A549 (cell line): ENCODE measurements at regions of chr7 and their contacts with region 1.

Region 1: DNA sequence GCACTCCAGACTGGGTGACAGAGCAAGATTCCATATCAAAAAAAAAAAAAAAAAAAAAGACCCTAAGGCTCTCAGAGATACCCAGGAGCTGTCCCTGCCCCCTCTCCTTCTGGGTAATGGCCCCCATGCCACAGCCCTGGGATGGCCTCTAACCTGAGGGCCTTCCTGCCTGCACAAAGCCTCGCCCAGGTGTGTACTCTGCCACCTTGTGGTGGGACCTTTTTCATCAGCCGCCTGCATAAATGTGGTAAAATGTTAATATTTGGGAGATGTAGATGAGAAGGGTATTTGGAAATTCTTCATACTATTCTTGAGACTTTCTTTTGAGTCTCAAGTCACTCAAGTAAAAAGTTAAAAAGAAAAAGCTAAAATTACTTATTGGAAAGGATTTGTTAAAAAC is 46.3 kb upstream of the RNF216 start:
- DNase-seq: peak in 1 of 2 experiments; percentile 50
- ATAC-seq: no peak
- H3K4me3 ChIP-seq: no peak overlapping the region
- H3K27ac ChIP-seq: no peak overlapping the region
- H3K4me1 ChIP-seq: no peaks in the 10 kb centered on the region; the same call in 2 of the 3 replicates
- CTCF ChIP-seq: peak; percentile 58
- EP300 ChIP-seq: no peak
- POLR2A ChIP-seq: no peak
- RAD21 ChIP-seq: peak in 1 of 2 experiments; percentile 51; a peak in 2 of 5 replicates

Region 2: DNA sequence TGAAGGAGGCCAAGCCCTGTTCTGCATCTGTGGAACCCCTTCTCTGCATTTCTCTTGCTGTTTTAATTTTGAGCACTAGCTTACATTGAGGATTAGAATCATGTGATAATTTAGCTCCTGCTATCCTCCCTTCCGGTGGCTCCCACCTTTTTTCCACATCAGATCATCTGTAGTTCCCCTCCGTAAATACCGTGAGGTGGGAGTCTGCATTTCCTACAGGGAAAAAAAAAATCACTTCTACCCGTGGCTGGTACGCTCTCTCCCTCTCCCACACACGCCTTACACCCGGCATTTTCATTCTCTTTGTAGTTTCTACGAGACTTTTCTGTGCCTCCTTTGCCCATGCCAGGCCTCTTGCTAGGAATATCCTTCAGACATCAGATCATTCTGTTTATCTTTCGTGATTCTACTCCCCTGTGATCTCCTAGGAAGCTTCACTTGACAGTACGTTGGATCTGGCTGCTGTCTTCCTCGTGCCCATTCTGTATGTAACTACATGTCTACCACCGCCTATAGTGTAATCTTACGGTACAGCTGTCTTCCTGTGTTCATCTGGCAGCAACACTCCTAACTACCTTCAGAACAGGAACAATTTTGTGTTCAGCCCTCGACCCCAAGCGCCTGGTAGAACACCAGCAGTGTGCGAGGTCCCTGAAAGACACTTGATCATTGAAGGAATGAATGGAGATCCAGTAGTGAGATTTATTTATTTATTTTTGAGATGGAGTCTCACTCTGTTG is 11.2 kb after region 1 on chr7:
- CTCF ChIA-PET with region 1: interaction called, 15 read pairs
- POLR2A ChIA-PET with region 1: no interaction called
- DNase-seq: no peak
- ATAC-seq: 0 out of 6 replicates have a peak, but pooled peaks of 1 of the 2 experiments have one; percentile 13
- H3K4me3 ChIP-seq: no peak overlapping the region
- H3K27ac ChIP-seq: no peak overlapping the region
- H3K4me1 ChIP-seq: no peaks in the 10 kb centered on the region
- CTCF ChIP-seq: no peak
- EP300 ChIP-seq: no peak
- POLR2A ChIP-seq: no peak
- RAD21 ChIP-seq: no peak